GM12878 (cell line): ENCODE measurements at regions of chr15 and their contacts with region 1.

Region 1: DNA sequence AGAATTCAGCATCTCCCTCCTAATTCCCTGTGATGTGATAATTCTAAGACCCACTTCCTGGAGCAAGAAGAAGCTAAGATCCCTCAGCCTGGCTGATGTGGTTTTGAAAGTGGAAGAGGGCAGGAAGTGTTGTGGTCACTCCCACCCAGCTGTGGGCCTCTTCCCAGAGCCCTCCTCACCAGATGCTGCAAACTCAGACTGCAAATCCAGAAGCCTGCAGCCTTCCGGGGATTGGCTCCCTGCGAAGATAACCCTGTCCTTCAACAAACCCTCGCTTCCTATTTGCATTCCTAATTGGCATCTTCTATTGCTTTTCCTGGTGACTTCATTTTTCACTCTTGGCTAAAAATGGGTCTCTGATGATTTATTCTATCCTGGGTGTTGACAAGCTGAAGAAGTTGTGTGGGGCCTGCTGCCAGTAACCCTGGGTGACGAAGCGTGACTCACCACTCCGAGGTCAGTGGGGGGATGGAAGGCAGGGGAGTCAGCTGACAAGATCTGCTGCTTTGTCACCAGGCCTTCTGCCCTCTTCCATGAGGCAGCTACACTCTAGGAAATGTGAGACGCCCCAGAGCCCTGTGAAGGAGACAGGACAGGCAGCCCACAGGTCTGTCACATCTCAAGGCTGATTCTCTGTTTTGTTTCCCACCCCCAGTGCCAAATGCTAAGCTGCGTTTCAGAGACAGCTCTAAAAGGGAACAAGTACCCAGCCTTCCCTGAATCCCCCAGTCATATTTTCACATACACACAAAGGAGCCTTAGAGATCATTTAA is 99.7 kb upstream of the LIPC start:
- DNase-seq: peak; percentile 82
- ATAC-seq: peak; percentile 97
- H3K4me3 ChIP-seq: 0 out of 2 replicates have a peak overlapping the region, but pooled peaks have one; percentile 31
- H3K27ac ChIP-seq: peak overlapping the region; percentile 81
- H3K4me1 ChIP-seq: peaks cover 31% of the 10 kb centered on the region
- H3K27me3 ChIP-seq: no peaks in the 10 kb centered on the region
- CTCF ChIP-seq: no peak
- EP300 ChIP-seq: peak; percentile 71 to 94
- POLR2A ChIP-seq: peak; percentile 76
- RAD21 ChIP-seq: 0 out of 2 replicates have a peak, but pooled peaks have one; percentile 2

Region 2: DNA sequence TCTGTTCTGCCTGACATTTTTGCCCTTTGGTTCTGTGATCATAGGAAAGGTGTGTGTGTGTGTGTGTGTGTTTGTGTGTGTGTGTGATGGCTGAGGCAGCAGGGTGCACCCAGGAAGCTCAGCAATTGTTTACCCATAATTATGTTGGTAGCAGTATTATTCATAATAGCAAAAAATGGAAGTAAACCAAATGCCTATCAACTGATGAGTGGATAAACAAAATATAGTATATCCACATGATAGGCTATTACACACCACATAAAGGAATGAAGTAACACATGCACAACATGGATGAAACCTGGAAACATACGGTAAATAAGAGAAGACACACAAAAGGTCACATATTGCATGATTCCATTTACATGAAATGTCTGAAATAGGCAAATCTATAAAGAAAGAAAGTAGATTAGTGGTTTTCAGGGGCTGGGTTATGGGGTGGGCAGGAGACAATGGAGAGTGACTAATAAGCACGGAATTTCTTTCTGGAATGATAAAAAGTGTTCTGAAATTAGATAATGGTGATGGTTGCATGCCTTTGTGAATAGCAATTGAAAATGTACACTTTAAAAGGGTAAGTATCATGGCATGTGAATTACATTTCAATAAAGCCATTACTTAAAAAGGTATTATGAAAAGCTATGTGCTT is 458.4 kb before region 1 on chr15:
- CTCF ChIA-PET with region 1: no interaction called
- POLR2A ChIA-PET with region 1: no interaction called
- RAD21 ChIA-PET with region 1: no interaction called
- SMC1A ChIA-PET with region 1: no interaction called
- in situ Hi-C with region 1: no loop called
- intact Hi-C with region 1: no loop called
- DNase-seq: no peak
- ATAC-seq: no peak
- H3K4me3 ChIP-seq: no peak overlapping the region
- H3K27ac ChIP-seq: no peak overlapping the region
- H3K4me1 ChIP-seq: no peaks in the 10 kb centered on the region
- H3K27me3 ChIP-seq: no peaks in the 10 kb centered on the region
- CTCF ChIP-seq: no peak
- EP300 ChIP-seq: no peak
- POLR2A ChIP-seq: no peak
- RAD21 ChIP-seq: no peak

Region 3: GRCh38 chr15:58357521-58358476 is 25.7 kb after region 1 on chr15:
- CTCF ChIA-PET with region 1: interaction called, 3 read pairs
- POLR2A ChIA-PET with region 1: interaction called, 3 read pairs
- RAD21 ChIA-PET with region 1: interaction called, 4 read pairs
- SMC1A ChIA-PET with region 1: interaction called, 16 read pairs
- in situ Hi-C with region 1: no loop called
- intact Hi-C with region 1: no loop called
- DNase-seq: no peak
- ATAC-seq: peak; percentile 75
- H3K4me3 ChIP-seq: no peak overlapping the region
- H3K27ac ChIP-seq: no peak overlapping the region
- H3K4me1 ChIP-seq: peaks cover 28% of the 10 kb centered on the region
- H3K27me3 ChIP-seq: no peaks in the 10 kb centered on the region
- CTCF ChIP-seq: no peak
- EP300 ChIP-seq: no peak
- POLR2A ChIP-seq: no peak
- RAD21 ChIP-seq: no peak

Region 4: GRCh38 chr15:58420579-58421043 is 88.5 kb after region 1 on chr15:
- CTCF ChIA-PET with region 1: no interaction called
- POLR2A ChIA-PET with region 1: no interaction called
- RAD21 ChIA-PET with region 1: interaction called, 12 read pairs
- SMC1A ChIA-PET with region 1: interaction called, 29 read pairs
- in situ Hi-C with region 1: no loop called
- intact Hi-C with region 1: no loop called
- DNase-seq: peak; percentile 28
- ATAC-seq: peak; percentile 87
- H3K4me3 ChIP-seq: peak overlapping the region; percentile 30; the same call in 1 of the 2 replicates
- H3K27ac ChIP-seq: peak overlapping the region; percentile 71
- H3K4me1 ChIP-seq: peaks cover 12% of the 10 kb centered on the region
- H3K27me3 ChIP-seq: no peaks in the 10 kb centered on the region
- CTCF ChIP-seq: no peak
- EP300 ChIP-seq: no peak
- POLR2A ChIP-seq: no peak
- RAD21 ChIP-seq: no peak

Region 5: GRCh38 chr15:58539548-58539947 is 207.5 kb after region 1 on chr15:
- CTCF ChIA-PET with region 1: no interaction called
- POLR2A ChIA-PET with region 1: no interaction called
- RAD21 ChIA-PET with region 1: no interaction called
- SMC1A ChIA-PET with region 1: no interaction called
- in situ Hi-C with region 1: no loop called
- intact Hi-C with region 1: no loop called
- DNase-seq: no peak
- ATAC-seq: no peak
- H3K4me3 ChIP-seq: no peak overlapping the region
- H3K27ac ChIP-seq: no peak overlapping the region
- H3K4me1 ChIP-seq: no peaks in the 10 kb centered on the region
- H3K27me3 ChIP-seq: no peaks in the 10 kb centered on the region; a peak in 1 of 4 replicates
- CTCF ChIP-seq: no peak
- EP300 ChIP-seq: no peak
- POLR2A ChIP-seq: no peak
- RAD21 ChIP-seq: no peak